ENCODE measurements at regions of chr2 and their contacts with region 1.

Region 1: GRCh38 chr2:200618587-200619021 is 32.8 kb downstream of the AOX1 start:
- DNase-seq: peak; percentile 58
- H3K4me3 Mint-ChIP-seq: no peak overlapping the region
- H3K27ac Mint-ChIP-seq: peak overlapping the region; percentile 47
- H3K4me1 Mint-ChIP-seq: peaks cover 38% of the 10 kb centered on the region
- H3K27me3 Mint-ChIP-seq: no peaks in the 10 kb centered on the region
- CTCF ChIP-seq: no peak

Region 2: DNA sequence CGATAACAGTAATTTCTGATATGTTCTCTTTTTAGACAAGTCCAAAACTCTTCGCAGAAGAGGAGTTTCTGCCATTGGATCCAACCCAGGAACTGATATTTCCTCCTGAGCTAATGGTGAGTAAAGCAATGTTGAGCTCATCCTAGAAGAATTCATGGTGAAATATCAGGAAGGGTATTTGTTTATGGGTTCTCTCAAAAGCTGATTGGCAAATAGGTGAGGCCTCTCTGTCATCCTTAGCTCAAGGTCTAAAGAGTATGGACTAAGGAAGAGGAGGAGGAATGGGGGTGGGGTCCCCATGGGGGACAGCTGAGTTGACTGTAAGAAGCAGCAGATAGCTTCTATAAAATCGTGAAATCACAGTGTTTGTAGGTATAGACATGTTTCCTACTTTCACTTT is 14.6 kb before region 1 on chr2:
- CTCF ChIA-PET with region 1: interaction called, 48 read pairs
- POLR2A ChIA-PET with region 1: interaction called, 5 read pairs
- intact Hi-C with region 1: no loop called
- DNase-seq: peak; percentile 64
- H3K4me3 Mint-ChIP-seq: peak overlapping the region; percentile 13
- H3K27ac Mint-ChIP-seq: peak overlapping the region; percentile 95
- H3K4me1 Mint-ChIP-seq: peaks cover 32% of the 10 kb centered on the region
- H3K27me3 Mint-ChIP-seq: no peaks in the 10 kb centered on the region
- CTCF ChIP-seq: no peak

Region 3: DNA sequence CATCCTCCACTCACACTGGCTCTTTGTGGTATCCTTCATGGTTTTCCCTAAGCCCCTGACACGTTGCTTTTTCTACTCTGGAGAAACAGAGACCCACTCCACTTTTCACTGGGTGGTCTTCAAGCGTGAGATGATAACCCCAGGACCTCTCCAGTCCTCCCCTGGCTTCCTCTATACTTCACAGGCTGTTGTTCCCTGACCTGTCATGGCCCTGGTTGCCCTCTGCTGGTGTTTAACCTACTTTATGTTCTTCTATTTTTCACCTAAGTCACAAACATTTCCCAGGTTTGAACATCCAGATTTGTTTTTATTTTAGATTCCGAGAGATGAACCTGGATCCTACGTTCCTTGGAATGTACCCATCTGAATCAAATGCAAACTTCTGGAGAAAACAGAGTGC is 51.7 kb after region 1 on chr2:
- CTCF ChIA-PET with region 1: interaction called, 3 read pairs
- POLR2A ChIA-PET with region 1: interaction called, 4 read pairs
- intact Hi-C with region 1: loop called (anchors 5 kb)
- DNase-seq: no peak
- H3K4me3 Mint-ChIP-seq: no peak overlapping the region
- H3K27ac Mint-ChIP-seq: no peak overlapping the region
- H3K4me1 Mint-ChIP-seq: no peaks in the 10 kb centered on the region
- H3K27me3 Mint-ChIP-seq: no peaks in the 10 kb centered on the region
- CTCF ChIP-seq: no peak

Region 4: GRCh38 chr2:200786829-200787228 is 168.2 kb after region 1 on chr2:
- CTCF ChIA-PET with region 1: no interaction called
- POLR2A ChIA-PET with region 1: no interaction called
- intact Hi-C with region 1: no loop called
- DNase-seq: peak; percentile 62
- H3K4me3 Mint-ChIP-seq: peak overlapping the region; percentile 10
- H3K27ac Mint-ChIP-seq: peak overlapping the region; percentile 89
- H3K4me1 Mint-ChIP-seq: peaks cover 26% of the 10 kb centered on the region
- H3K27me3 Mint-ChIP-seq: no peaks in the 10 kb centered on the region
- CTCF ChIP-seq: no peak

Measured in MCF 10A (cell line).